Activated T-helper 2 cell treated with anti-CD3 and anti-CD28 coated beads, Interferon-gamma antibody, Interleukin-2, Interleukin-4, amounts not matched to agents 10 μg/mL and 5 μg/mL and 100 μg/mL, durations not matched to agents 14 hours and 24 hours and 36 hours (primary cell): ENCODE measurements at regions of chr18 and their contacts with region 1.

Region 1: GRCh38 chr18:13268158-13269012 is 49.8 kb downstream of the LDLRAD4 start:
- DNase-seq: no peak
- H3K4me3 Mint-ChIP-seq: peak overlapping the region; percentile 47
- H3K27ac Mint-ChIP-seq: peak overlapping the region; percentile 84
- H3K4me1 Mint-ChIP-seq: peaks cover 63% of the 10 kb centered on the region
- H3K27me3 Mint-ChIP-seq: no peaks in the 10 kb centered on the region

Region 2: DNA sequence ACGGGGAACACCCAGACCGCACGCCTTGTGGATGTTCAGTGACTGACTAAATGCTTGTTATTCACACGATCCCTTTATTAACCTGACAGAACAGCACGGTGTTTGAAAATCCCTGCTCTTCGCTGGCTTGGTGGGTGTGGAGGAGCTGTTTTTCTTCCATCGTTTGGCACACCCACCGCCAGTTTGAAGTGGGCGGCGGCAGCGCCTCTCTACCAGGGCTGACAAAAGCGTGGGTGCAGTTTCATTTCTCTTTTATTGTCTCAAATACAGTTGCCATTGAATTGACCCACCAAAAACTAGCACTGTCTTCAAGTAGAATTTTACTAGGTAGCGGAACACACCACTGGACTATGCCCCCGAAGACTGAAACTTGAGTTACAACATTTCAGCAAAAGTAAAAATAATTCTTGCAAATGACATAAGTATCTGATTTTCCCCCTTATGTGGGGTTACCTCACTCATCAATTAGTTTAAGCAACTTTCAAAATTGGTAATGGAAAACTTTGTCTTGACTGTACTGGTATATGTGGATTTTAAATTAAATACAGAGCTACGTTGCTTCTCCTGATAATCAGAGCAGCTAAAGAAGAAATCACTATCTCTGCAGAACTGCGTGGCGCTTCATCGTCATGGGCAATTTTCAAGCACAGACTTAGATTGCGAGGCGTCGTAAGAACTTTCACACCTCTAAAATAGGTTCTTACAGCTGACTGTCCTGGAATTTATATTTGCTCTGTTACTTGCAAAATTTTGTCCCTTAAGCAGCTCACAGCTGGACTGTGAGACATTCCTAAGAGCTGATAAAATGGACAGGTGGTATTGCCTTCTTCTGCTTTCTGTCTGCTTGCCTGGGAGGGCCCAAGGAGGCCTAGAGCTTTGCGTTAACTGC is 11.0 kb after region 1 on chr18:
- intact Hi-C with region 1: loop called (anchors 1 kb)
- DNase-seq: no peak
- H3K4me3 Mint-ChIP-seq: peak overlapping the region; percentile 60
- H3K27ac Mint-ChIP-seq: peak overlapping the region; percentile 60
- H3K4me1 Mint-ChIP-seq: peaks cover 70% of the 10 kb centered on the region
- H3K27me3 Mint-ChIP-seq: no peaks in the 10 kb centered on the region

Region 3: GRCh38 chr18:13289481-13290205 is 21.3 kb after region 1 on chr18:
- intact Hi-C with region 1: loop called (anchors 1 kb)
- DNase-seq: no peak
- H3K4me3 Mint-ChIP-seq: no peak overlapping the region
- H3K27ac Mint-ChIP-seq: peak overlapping the region; percentile 64
- H3K4me1 Mint-ChIP-seq: peaks cover 55% of the 10 kb centered on the region
- H3K27me3 Mint-ChIP-seq: no peaks in the 10 kb centered on the region

Region 4: GRCh38 chr18:13381944-13382365 is 113.6 kb after region 1 on chr18:
- intact Hi-C with region 1: no loop called
- DNase-seq: no peak
- H3K4me3 Mint-ChIP-seq: peak overlapping the region; percentile 74
- H3K27ac Mint-ChIP-seq: peak overlapping the region; percentile 96
- H3K4me1 Mint-ChIP-seq: peaks cover 53% of the 10 kb centered on the region
- H3K27me3 Mint-ChIP-seq: no peaks in the 10 kb centered on the region

Region 5: DNA sequence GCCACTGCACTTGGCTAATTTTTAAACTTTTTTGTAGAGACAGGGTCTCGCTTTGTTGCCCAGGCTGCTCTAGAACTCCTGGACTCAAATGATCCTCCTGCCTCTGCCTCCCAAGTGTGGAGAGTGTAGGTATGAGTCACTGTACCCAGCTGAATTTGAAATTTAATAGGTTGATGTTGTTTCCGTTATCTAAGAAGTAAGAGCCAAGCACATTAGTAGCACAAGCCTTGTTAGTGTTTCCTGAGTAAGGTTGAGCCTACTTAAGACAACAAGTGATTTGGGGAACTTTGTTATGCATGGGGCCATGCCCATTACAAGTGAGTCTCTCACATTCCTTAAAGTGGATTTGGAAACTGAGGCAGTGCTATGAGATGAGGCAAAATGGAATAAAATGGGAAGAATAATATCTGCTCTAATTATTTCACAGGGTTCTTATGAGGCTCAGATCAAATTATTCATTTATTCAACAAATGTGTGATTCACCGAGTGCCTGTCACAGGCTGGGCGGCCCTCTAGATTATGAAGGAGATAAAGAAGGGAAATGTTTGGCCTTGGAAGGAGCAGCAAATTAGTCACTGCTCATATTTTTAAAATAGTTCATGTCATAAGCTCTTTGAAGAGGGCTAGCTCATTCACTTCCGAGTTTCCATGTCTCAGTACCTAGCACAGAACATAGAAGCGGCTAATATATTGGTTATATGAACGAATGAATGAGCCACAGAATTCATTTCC is 167.4 kb after region 1 on chr18:
- intact Hi-C with region 1: loop called (anchors 1 kb)
- DNase-seq: no peak
- H3K4me3 Mint-ChIP-seq: no peak overlapping the region
- H3K27ac Mint-ChIP-seq: peak overlapping the region; percentile 54
- H3K4me1 Mint-ChIP-seq: peaks cover 56% of the 10 kb centered on the region
- H3K27me3 Mint-ChIP-seq: no peaks in the 10 kb centered on the region

Region 6: GRCh38 chr18:13566941-13567746 is 298.8 kb after region 1 on chr18:
- intact Hi-C with region 1: loop called (anchors 5 kb)
- DNase-seq: no peak
- H3K4me3 Mint-ChIP-seq: peak overlapping the region; percentile 57
- H3K27ac Mint-ChIP-seq: peak overlapping the region; percentile 94
- H3K4me1 Mint-ChIP-seq: peaks cover 67% of the 10 kb centered on the region
- H3K27me3 Mint-ChIP-seq: no peaks in the 10 kb centered on the region

Region 7: DNA sequence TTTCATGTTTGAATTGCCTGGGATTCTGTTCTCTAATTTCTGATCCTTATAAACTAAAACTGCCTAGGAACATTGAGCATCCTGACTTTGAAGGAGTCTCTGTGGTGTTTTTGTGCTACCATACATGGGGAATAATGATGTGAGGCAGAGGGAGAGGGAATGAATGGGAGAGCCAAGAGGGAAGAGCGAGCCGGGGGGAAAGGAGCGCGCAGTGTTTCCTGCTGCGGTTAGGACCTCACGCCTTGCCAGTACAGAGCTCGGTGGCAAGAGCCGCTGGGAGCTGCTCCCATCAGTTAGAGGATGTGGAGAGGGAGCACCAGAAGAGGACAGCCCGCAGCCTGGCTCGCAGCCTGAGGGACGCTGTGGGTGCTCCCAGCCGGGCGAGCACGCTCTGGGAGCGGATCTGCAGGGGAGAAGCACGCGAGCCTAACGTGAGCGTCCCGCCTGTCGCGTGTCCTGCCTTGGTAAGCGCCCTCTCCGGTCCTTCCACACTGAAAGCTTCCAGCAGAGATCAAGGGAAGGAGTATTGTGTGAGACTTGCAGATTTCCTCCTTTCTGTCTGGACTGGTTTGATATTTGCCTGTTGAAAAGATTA is 343.3 kb after region 1 on chr18:
- intact Hi-C with region 1: loop called (anchors 2 kb)
- DNase-seq: no peak
- H3K4me3 Mint-ChIP-seq: peak overlapping the region; percentile 78
- H3K27ac Mint-ChIP-seq: peak overlapping the region; percentile 90
- H3K4me1 Mint-ChIP-seq: peaks cover 82% of the 10 kb centered on the region
- H3K27me3 Mint-ChIP-seq: no peaks in the 10 kb centered on the region

Region 8: GRCh38 chr18:13726232-13726971 is 458.0 kb after region 1 on chr18 and contains the starts of genes FAM210A and RNMT:
- intact Hi-C with region 1: loop called (anchors 2 kb)
- DNase-seq: peak; percentile 91
- H3K4me3 Mint-ChIP-seq: peak within 1 kb of the TSS; percentile 88
- H3K27ac Mint-ChIP-seq: peak within 1 kb of the TSS; percentile 79
- H3K4me1 Mint-ChIP-seq: peaks cover 49% of the 10 kb centered on the region
- H3K27me3 Mint-ChIP-seq: no peaks in the 10 kb centered on the region
- total RNA-seq, gene FAM210A: 30.3 and 33.8 TPM in 2 replicates
- total RNA-seq, gene RNMT: 54.0 and 54.3 TPM in 2 replicates